ENCODE measurements at regions of chr3 and their contacts with region 1.

Region 1: DNA sequence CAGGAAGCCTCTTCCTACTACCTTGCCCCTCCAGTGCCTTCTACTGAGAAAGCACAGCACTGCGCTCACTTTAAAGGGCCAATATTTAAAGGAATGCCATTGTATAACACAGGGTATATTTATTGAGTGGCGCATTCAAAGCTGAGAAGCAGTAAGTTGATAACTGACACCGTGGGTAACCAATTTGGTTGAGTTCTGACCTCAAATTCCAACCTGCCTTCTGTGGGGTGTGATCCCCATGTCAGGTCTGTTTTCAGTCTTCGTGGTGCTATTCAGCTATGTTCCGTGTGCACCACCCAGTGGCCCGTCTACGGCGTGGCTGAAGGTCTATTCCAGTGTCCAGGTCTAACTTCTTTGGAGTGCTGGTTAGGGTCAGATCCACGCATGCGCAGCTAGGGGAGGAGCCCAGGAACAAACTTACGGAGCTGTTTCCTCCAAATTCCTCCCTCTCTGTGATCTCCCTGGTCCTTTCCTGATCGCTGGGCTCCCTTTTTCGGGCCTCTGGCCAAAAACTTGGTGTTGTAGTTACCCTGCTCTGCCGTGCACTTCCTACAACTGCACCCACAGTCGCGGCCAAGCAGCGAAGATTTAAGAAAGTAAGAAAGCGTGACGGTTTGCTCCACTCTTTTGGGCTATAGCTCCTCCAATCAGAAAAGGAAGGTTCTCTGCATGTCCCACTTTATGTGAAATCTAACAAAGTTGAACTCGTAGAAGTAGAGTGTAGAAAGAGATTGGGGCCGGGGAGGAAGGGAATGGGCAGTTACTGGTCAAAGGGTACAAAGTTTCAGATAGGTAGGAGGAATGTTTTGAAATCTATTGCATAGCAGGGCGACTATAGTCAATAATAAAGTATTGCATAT is 7.7 kb downstream of the LRRC2 start:
- DNase-seq: peak; percentile 84
- H3K4me3 Mint-ChIP-seq: no peak overlapping the region
- H3K27ac Mint-ChIP-seq: peak overlapping the region; percentile 88
- H3K4me1 Mint-ChIP-seq: peaks cover 16% of the 10 kb centered on the region
- H3K27me3 Mint-ChIP-seq: no peaks in the 10 kb centered on the region
- CTCF ChIP-seq: peak; percentile 83

Region 2: DNA sequence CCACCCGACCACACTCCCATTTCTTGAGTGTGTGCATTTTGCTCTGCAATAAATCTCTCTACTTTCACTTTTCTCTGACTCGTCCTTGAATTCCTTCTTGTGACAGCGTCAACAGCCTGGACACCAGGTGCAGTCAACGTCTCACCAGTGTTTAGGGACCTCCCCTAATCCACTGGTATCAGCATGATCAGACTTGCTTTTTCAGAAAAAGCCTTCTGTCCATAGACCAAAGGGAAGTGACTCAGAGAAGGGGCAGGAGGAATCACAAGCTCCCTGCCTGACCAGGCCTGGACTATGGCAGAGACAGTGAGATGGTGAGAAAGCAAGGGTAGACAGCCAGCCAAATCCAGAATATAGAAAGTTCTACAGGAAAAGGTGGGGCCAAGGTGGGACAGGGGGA is 172.2 kb before region 1 on chr3:
- CTCF ChIA-PET with region 1: no interaction called
- POLR2A ChIA-PET with region 1: no interaction called
- intact Hi-C with region 1: no loop called
- DNase-seq: peak; percentile 93
- H3K4me3 Mint-ChIP-seq: peak overlapping the region; percentile 57
- H3K27ac Mint-ChIP-seq: no peak overlapping the region
- H3K4me1 Mint-ChIP-seq: peaks cover 14% of the 10 kb centered on the region
- H3K27me3 Mint-ChIP-seq: no peaks in the 10 kb centered on the region
- CTCF ChIP-seq: no peak

Region 3: DNA sequence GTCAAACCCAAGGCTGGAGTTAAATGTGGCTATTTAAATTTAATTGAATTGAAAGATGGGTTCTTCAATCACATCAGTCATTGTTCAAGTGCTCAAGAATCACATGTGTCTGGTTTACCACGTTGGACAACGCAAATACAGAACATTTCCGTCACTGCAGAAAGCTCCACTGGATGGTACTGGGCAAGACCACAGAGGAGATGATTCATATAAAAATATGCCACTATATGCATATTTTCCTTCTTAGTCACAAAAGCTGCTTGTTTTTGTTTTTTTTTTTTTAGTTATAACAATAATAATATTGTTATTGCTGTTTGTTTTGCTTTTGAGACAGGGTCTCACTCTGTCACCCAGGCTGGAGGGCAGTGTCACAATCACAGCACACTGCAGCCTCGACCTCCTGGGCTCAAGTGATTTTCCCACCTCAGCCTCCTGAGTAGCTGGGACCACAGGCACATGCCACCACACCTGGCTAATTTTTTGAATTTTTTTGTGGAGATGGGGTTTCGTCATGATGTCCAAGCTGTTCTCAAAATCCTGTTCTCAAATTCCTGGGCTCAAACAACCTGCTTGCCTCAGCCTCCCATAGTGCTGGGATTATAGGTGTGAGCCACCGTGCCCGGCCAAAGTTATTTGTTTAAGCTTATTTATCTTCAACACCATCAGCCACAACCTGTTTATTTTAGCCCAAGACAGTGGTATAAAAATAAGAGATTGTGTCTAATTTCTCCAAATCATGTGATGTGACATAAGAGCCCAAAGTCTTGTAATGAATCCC is 41.2 kb before region 1 on chr3:
- CTCF ChIA-PET with region 1: interaction called, 3 read pairs
- POLR2A ChIA-PET with region 1: interaction called, 3 read pairs
- intact Hi-C with region 1: loop called (anchors 1 kb)
- DNase-seq: peak; percentile 80
- H3K4me3 Mint-ChIP-seq: peak overlapping the region; percentile 15
- H3K27ac Mint-ChIP-seq: peak overlapping the region; percentile 95
- H3K4me1 Mint-ChIP-seq: peaks cover 22% of the 10 kb centered on the region
- H3K27me3 Mint-ChIP-seq: no peaks in the 10 kb centered on the region
- CTCF ChIP-seq: no peak